ENCODE measurements at regions of chr3 and their contacts with region 1.

Region 1: GRCh38 chr3:179526989-179527391 is 35.7 kb upstream of the ACTL6A start:
- DNase-seq: peak in 4 of 5 donors; percentile 54 to 78 (median 68)
- ATAC-seq: peak; percentile 93 to 99 (median 98)
- H3K4me3 ChIP-seq: peak overlapping the region in 7 of 12 donors; percentile 8 to 40 (median 24)
- H3K27ac ChIP-seq: peak overlapping the region in 11 of 12 donors; percentile 25 to 83 (median 65)
- H3K4me1 ChIP-seq: peaks cover 0 to 21% (median 17%) of the 10 kb centered on the region in 12 donors
- H3K27me3 ChIP-seq: no peaks in the 10 kb centered on the region
- CTCF ChIP-seq: no peak
- POLR2A ChIP-seq: no peak

Region 2: DNA sequence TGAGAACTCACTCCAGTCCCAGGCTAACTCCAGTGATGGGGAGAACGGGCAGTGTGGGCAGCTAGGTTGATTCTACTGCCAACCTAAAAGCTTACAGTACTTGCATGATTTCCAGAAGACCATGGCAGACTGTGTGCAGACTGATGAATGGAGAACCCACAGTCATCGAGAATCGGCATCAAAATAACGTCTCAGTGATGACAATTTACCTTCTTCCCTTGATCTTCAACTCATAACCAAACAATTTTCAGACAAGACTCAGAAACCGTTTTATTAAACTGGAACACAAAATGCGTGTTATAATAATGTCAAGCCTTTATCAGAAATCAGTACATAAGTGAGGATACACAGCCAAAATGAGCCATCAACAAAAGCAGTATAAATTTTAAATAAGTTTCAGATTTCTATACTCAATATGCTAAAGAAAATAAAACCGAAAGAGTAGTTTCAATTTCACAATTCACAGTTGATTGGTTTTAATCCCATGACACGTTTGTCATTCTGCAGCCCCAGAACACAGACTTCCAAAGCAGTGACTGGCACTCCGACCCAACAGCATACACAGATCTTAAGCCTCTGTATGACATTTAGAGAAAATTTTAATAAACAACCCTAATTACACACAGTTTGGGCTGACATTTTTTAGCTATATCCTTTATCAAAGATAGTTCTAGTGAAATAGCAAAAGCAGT is 509.9 kb before region 1 on chr3:
- intact Hi-C with region 1: no loop called
- DNase-seq: no peak
- ATAC-seq: no peak
- H3K4me3 ChIP-seq: no peak overlapping the region
- H3K27ac ChIP-seq: no peak overlapping the region
- H3K4me1 ChIP-seq: peaks cover 0 to 14% (median 10%) of the 10 kb centered on the region in 12 donors
- H3K27me3 ChIP-seq: no peaks in the 10 kb centered on the region
- CTCF ChIP-seq: no peak
- POLR2A ChIP-seq: no peak

Region 3: DNA sequence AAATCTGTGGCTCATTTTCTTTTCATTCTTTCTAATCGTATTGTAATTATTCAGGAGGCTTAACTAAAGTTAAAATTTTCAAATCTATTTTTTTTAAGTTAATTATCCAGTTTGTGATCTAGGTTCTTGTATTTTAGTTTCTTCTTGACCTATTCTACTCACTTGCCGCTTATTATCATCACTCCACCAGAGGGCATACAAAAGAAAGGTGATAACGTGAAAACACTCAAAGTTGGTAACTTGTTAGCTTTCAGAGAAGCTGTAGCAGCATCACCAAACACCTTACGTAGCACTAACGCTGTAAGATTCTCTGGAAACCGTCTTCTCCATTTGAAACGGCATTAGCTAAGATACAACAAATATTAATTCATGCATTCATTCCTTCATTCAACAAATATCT is 80.5 kb before region 1 on chr3:
- intact Hi-C with region 1: loop called in 4 of 10 experiments (anchors 2 to 10 kb)
- DNase-seq: no peak
- ATAC-seq: no peak
- H3K4me3 ChIP-seq: no peak overlapping the region
- H3K27ac ChIP-seq: peak overlapping the region in 2 of 12 donors; percentile 10 to 13
- H3K4me1 ChIP-seq: peaks cover 4 to 47% (median 25%) of the 10 kb centered on the region in 12 donors
- H3K27me3 ChIP-seq: no peaks in the 10 kb centered on the region
- CTCF ChIP-seq: peak in 9 of 12 donors; percentile 12 to 52 (median 38)
- POLR2A ChIP-seq: no peak

Region 4: DNA sequence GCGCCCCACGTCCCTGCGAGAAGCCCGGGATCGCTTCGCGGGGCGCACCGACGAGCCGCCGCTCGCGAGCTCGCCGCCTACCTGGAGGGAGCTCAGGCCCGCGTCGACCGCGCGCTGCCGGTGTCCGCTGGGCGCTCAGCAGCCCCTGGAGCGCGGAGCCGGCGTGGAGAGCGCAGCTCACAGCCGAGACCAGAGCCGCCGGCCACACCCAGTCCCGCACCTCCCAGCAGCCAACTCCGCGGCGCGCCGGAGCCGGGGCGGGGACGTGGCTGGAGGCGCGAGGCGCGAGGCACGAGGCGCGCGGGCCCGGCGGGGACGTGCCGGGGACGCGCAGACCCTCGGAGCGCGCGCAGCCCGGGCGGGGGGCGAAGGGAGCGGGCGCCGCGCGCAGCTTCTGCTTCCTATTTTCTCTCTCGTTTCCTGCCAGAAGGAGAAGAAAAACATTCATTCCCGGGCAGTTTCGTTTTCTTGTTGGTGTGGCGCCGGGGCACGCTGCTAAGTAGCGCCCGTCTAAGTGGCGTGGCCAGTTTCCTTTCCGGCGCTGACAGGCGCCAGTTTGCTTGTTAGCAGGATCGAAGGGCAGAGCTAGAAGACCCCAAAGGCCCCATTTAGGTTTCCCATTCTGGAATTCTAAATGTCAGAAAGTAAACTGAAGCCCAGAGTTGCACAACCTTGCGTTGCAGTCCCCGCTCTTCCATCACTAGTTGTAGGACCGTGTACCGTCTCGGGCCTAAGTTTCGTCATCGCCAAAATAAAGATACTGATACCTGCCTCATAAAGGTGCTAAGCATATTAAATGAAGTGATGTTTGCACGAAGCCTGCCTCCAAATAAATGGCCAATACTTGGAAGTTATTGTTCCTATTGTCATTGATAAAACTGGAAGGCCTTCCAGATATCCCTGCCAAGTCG is 75.5 kb before region 1 on chr3 and contains the start of gene GNB4:
- intact Hi-C with region 1: loop called in 4 of 10 experiments (anchors 2 to 10 kb)
- DNase-seq: peak; percentile 87 to 91 (median 89)
- ATAC-seq: peak; percentile 78 to 96 (median 86)
- H3K4me3 ChIP-seq: peak within 1 kb of the TSS; percentile 43 to 86 (median 82)
- H3K27ac ChIP-seq: peak within 1 kb of the TSS; percentile 82 to 97 (median 94)
- H3K4me1 ChIP-seq: peaks cover 7 to 50% (median 30%) of the 10 kb centered on the region in 12 donors
- H3K27me3 ChIP-seq: no peaks in the 10 kb centered on the region
- CTCF ChIP-seq: no peak
- POLR2A ChIP-seq: peak in 1 of 2 donors; percentile 65
- total RNA-seq, gene GNB4: 7.2 to 75.1 (median 12.5) TPM